ENCODE measurements at regions of chr21 and their contacts with region 1.

Region 1: DNA sequence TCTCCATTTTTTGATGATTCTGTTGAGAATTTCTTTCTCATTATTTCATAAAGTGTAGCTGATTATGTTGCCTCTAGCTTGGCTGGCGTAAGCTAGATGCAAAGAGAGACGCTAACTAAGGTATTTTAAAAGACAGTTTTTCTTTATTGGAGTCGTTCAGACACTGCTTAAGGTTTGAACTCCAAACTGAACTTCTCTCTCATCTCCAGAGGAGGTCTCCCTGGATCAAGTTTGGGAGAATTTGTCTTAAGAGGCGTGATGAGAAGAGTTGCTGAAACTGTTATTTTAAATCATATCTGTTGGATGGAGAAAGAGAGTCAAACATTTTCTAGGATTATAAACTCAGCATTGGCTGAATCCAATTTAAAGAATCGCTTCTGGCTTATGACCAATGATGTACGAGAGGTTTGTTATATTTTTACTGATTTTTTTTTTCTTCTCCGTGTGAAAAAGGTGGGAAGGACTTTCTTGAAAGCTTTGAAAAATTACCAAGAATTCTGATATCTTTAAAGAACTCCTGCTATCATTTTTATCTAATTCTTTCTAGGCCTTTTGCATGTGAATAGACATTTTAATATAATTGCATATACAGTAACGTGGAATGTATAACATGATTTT is 34.0 kb downstream of the MAP3K7CL start:
- DNase-seq: no peak

Region 2: GRCh38 chr21:29347274-29347681 is 182.8 kb after region 1 on chr21:
- intact Hi-C with region 1: loop called (anchors 5 kb)
- DNase-seq: no peak

Region 3: GRCh38 chr21:29372063-29372802 is 207.8 kb after region 1 on chr21:
- intact Hi-C with region 1: loop called (anchors 5 kb)
- DNase-seq: peak in 2 of 10 donors; percentile 31 to 53